CD14-positive monocyte (primary cell): ENCODE measurements at regions of chr17 and their contacts with region 1.

Region 1: DNA sequence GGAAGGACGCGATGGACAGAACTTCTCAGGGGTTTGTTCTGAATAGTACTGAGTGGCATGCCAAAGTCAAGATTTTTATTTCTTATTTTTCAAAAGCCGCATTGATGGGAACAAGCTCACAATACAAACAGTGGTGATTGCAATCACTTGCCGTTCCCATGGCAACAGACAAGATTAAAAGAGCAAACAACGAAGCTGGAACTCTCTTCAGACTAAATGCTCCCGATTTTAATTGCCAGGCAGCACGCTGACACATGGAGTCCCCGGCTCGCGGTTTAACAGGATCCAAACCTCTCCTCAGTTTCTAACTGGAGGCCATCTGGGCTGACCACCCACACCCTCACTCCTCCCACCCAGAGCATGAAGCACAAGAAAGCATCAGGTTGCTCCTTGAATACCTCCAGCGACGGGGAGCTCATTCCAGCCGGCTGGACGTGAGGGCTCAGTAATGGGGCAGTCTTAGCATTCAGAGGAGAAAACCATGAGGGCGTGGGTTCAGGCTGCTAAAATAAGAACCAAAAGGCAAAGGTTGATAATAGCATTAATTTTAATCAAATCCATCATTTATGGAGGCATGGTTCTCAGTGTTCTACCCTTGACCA is 41.5 kb downstream of the AIPL1 start:
- DNase-seq: no peak
- H3K4me3 ChIP-seq: no peak overlapping the region
- H3K4me3 Mint-ChIP-seq: no peak overlapping the region
- H3K27ac ChIP-seq: no peak overlapping the region
- H3K27ac Mint-ChIP-seq: no peak overlapping the region
- H3K4me1 ChIP-seq: no peaks in the 10 kb centered on the region
- H3K4me1 Mint-ChIP-seq: no peaks in the 10 kb centered on the region
- H3K27me3 ChIP-seq: peaks cover 0 to 2% of the 10 kb centered on the region in 2 donors
- H3K27me3 Mint-ChIP-seq: peaks cover 2 to 7% (median 4%) of the 10 kb centered on the region in 3 donors
- CTCF ChIP-seq: no peak

Region 2: DNA sequence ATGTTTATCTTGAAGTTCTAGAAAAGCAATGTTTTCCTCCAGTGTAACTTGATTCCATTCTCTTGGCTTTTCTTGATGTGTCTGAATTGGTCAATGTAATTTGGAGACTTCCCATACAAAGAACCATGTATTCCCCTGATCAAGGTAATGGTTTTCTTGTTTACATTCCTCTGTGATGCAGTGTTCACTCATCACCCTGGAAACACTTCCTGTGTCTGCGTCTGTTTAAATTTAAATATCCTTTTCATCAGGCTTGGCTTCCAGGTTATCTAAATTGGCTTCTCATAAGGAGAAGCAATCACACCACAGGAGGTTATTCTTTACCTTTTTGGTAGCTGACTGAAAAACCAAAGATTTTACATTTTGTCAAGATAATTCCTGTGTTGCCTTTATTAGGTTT is 560.6 kb before region 1 on chr17:
- intact Hi-C with region 1: no loop called
- DNase-seq: no peak
- H3K4me3 ChIP-seq: no peak overlapping the region
- H3K4me3 Mint-ChIP-seq: no peak overlapping the region
- H3K27ac ChIP-seq: no peak overlapping the region
- H3K27ac Mint-ChIP-seq: no peak overlapping the region
- H3K4me1 ChIP-seq: no peaks in the 10 kb centered on the region
- H3K4me1 Mint-ChIP-seq: no peaks in the 10 kb centered on the region
- H3K27me3 ChIP-seq: peaks cover 3 to 4% of the 10 kb centered on the region in 2 donors
- H3K27me3 Mint-ChIP-seq: peaks cover 5 to 20% (median 8%) of the 10 kb centered on the region in 3 donors
- CTCF ChIP-seq: no peak

Region 3: DNA sequence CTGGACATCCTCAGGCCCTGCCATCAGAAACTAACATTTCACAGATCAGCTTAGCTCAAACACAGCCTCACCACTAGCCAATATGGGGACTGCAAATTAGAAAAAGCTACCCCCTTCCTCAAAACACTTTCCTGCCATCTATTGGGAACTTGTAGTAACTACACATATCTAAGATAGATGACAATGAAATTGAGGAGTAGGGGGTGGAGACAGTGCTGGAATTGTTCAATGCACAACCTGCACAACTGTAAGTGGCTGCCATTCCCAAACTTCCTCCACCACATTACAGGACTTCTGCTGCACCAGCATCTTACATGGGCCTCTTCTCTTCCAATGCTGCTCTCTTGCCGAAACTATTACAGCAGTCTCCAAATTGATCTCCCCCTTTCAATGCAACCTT is 19.6 kb after region 1 on chr17:
- intact Hi-C with region 1: loop called in 1 of 2 experiments (anchors 1 kb)
- DNase-seq: no peak
- H3K4me3 ChIP-seq: no peak overlapping the region
- H3K4me3 Mint-ChIP-seq: no peak overlapping the region
- H3K27ac ChIP-seq: no peak overlapping the region
- H3K27ac Mint-ChIP-seq: no peak overlapping the region
- H3K4me1 ChIP-seq: no peaks in the 10 kb centered on the region
- H3K4me1 Mint-ChIP-seq: no peaks in the 10 kb centered on the region
- H3K27me3 ChIP-seq: no peaks in the 10 kb centered on the region
- H3K27me3 Mint-ChIP-seq: peaks cover 9 to 26% (median 11%) of the 10 kb centered on the region in 3 donors
- CTCF ChIP-seq: peak; percentile 38